Caco-2 (cell line): ENCODE measurements at regions of chr21 and their contacts with region 1.

Region 1: GRCh38 chr21:43719748-43720538 is 1.0 kb downstream of the PDXK start:
- DNase-seq: no peak
- H3K4me3 ChIP-seq: peak overlapping the region; percentile 98
- H3K4me3 Mint-ChIP-seq: peak overlapping the region; percentile 87
- H3K27ac Mint-ChIP-seq: peak overlapping the region; percentile 75
- H3K4me1 ChIP-seq: peaks cover 23% of the 10 kb centered on the region
- H3K4me1 Mint-ChIP-seq: peaks cover 21% of the 10 kb centered on the region
- H3K27me3 ChIP-seq: no peaks in the 10 kb centered on the region
- H3K27me3 Mint-ChIP-seq: no peaks in the 10 kb centered on the region
- CTCF ChIP-seq: no peak

Region 2: GRCh38 chr21:43681650-43682049 is 38.3 kb before region 1 on chr21:
- CTCF ChIA-PET with region 1: no interaction called
- POLR2A ChIA-PET with region 1: no interaction called
- intact Hi-C with region 1: no loop called
- DNase-seq: no peak
- H3K4me3 ChIP-seq: no peak overlapping the region
- H3K4me3 Mint-ChIP-seq: no peak overlapping the region
- H3K27ac Mint-ChIP-seq: no peak overlapping the region
- H3K4me1 ChIP-seq: no peaks in the 10 kb centered on the region
- H3K4me1 Mint-ChIP-seq: peaks cover 12% of the 10 kb centered on the region
- H3K27me3 ChIP-seq: no peaks in the 10 kb centered on the region
- H3K27me3 Mint-ChIP-seq: no peaks in the 10 kb centered on the region
- CTCF ChIP-seq: no peak

Region 3: DNA sequence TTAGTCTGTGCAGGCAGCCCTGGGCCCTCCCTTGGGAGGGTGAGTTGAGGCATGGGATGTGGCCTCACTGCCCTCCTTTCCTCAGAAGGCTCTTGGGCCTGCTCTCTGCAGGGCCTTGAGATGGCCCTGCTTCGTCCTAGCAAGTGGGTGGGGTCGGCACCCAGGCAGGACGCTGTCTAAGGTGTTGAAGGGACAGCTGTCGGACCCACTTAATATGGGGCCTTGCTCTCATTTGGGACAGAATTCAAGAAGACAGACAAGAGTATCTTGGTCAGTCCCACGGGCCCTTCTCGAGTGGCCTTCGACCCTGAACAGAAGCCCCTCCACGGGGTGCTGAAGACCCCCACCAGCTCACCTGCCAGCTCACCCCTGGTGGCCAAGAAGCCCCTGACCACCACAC is 27.0 kb before region 1 on chr21:
- CTCF ChIA-PET with region 1: no interaction called
- POLR2A ChIA-PET with region 1: no interaction called
- intact Hi-C with region 1: no loop called
- DNase-seq: no peak
- H3K4me3 ChIP-seq: no peak overlapping the region
- H3K4me3 Mint-ChIP-seq: no peak overlapping the region
- H3K27ac Mint-ChIP-seq: peak overlapping the region; percentile 20
- H3K4me1 ChIP-seq: peaks cover 8% of the 10 kb centered on the region
- H3K4me1 Mint-ChIP-seq: no peaks in the 10 kb centered on the region
- H3K27me3 ChIP-seq: no peaks in the 10 kb centered on the region
- H3K27me3 Mint-ChIP-seq: no peaks in the 10 kb centered on the region
- CTCF ChIP-seq: no peak

Region 4: GRCh38 chr21:43740497-43741156 is 20.7 kb after region 1 on chr21:
- CTCF ChIA-PET with region 1: no interaction called
- POLR2A ChIA-PET with region 1: no interaction called
- intact Hi-C with region 1: loop called (anchors 1 kb)
- DNase-seq: peak; percentile 56 to 67
- H3K4me3 ChIP-seq: no peak overlapping the region
- H3K4me3 Mint-ChIP-seq: no peak overlapping the region
- H3K27ac Mint-ChIP-seq: peak overlapping the region; percentile 63
- H3K4me1 ChIP-seq: peaks cover 12% of the 10 kb centered on the region
- H3K4me1 Mint-ChIP-seq: no peaks in the 10 kb centered on the region
- H3K27me3 ChIP-seq: no peaks in the 10 kb centered on the region
- H3K27me3 Mint-ChIP-seq: no peaks in the 10 kb centered on the region
- CTCF ChIP-seq: no peak